Ovary (tissue), 10 donors: ENCODE measurements at regions of chr5 and their contacts with region 1.

Region 1: DNA sequence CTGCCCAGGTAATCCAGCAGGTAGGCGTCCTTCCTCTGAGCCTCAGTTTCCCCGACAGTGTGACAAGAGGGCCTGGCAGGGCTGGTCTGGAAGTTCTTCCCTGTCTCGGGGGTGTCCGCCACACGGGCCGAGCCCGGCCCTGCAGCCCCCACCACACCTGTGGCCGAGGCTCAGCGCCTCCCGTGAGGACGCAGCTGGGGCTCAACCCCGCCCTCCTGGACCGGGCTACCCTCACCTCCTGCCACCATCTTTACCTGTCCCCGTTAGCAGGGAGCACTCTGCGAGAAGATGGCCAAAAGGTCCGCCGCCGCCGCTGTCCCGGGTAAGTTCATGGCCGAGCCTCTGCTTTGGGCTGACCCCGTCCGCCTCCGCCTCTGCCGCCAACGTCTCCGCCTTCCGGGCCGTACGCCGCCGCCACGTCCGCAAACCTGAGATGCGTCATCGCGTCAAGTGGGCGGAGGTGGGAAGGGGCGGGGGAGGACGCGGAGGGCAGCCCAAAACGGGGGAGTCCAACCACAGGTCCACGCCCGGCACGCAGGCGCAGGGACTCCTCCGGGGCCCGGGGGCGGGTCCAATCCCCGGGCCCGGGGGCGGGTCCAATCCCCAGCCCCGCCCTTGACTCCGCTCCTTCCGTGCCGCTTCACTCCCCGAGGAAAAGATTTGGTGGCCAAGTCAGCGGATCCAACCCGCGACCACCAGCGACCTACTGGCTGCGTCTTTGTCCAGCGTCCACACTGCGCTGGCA is at the start of gene LYSMD3:
- DNase-seq: peak; percentile 98 to 99 (median 99)
- H3K4me3 ChIP-seq: peak within 1 kb of the TSS; percentile 90
- H3K27ac ChIP-seq: peak within 1 kb of the TSS; percentile 93 to 96
- H3K4me1 ChIP-seq: peaks cover 2% of the 10 kb centered on the region
- H3K27me3 ChIP-seq: no peaks in the 10 kb centered on the region
- CTCF ChIP-seq: no peak
- EP300 ChIP-seq: no peak
- POLR2A ChIP-seq: peak; percentile 94
- total RNA-seq, gene LYSMD3: 19.0 to 26.8 (median 23.8) TPM

Region 2: DNA sequence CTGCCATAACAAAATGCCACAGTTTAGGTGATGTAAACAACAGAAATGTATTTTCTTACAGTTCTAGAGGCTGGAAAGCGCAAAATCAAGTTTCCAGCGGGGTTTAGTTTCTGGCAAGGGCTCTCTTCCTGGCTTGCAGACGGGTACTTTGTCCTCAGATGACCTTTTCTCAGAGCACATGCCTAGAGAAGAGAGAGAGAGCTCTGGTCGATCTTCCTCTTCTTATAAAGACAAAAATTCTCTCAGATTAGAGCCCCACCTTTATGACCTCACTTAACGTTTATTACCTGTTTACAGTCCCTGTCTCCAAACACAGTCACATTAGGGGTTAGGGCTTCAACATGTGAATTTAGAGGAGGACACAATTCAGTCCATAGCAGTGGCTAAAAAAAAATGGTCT is 239.5 kb before region 1 on chr5:
- intact Hi-C with region 1: no loop called
- DNase-seq: no peak
- H3K4me3 ChIP-seq: no peak overlapping the region
- H3K27ac ChIP-seq: no peak overlapping the region
- H3K4me1 ChIP-seq: no peaks in the 10 kb centered on the region
- H3K27me3 ChIP-seq: no peaks in the 10 kb centered on the region
- CTCF ChIP-seq: no peak
- EP300 ChIP-seq: no peak
- POLR2A ChIP-seq: no peak

Region 3: DNA sequence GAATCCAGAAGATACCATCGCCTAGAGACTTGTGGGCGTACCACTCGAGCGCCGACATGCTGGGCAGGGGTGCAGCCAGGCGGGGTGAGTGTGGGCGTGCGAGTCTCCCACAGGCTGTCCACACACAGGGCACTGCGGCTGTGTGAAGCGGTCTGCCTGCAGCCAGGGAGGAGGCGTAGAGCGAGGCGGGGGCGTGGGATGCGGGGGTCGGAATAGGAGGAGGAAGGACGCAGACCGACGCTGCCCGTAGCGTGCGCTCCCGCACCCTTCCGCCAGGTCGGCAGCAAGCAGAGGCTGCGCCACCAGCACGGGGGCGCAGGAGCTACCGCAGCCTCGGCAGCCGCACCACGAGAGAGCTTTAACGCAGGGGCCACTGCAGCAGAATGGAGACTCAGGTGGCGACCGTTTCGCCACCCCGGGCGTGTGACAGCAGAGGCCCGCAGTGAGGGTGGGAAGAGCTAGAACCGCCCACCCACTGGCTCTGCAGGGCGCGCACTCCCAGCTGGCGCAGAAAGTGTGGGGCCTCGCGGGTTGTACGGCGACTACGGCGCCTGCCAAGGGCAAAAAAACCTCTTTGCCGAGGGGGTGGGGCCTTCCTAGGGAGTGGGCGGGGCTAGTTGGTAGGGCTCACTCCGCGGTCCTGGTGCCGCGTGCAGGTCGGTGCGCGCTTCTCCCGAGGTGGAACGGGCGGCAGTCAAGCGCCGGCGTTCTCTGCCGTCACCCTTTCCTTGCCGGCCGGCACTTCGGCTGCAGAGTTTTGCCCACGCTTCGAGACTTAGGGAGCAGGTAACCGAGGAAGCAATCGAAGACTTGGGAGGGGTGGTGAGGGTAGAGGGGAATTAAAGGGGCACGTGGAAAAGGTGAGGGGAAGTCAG is 54.9 kb before region 1 on chr5 and contains the starts of genes MBLAC2 and POLR3G:
- intact Hi-C with region 1: loop called in 1 of 4 experiments (anchors 10 kb)
- DNase-seq: peak; percentile 92 to 95 (median 94)
- H3K4me3 ChIP-seq: peak within 1 kb of the TSS; percentile 55
- H3K27ac ChIP-seq: peak within 1 kb of the TSS in 1 of 2 donors; percentile 73
- H3K4me1 ChIP-seq: peaks cover 4% of the 10 kb centered on the region
- H3K27me3 ChIP-seq: no peaks in the 10 kb centered on the region
- CTCF ChIP-seq: peak; percentile 48 to 64 (median 60)
- EP300 ChIP-seq: no peak
- POLR2A ChIP-seq: peak; percentile 31
- total RNA-seq, gene MBLAC2: 4.7 to 13.1 (median 10.5) TPM
- total RNA-seq, gene POLR3G: 0.92 to 4.2 (median 1.8) TPM